Astrocyte of the cerebellum (primary cell): ENCODE measurements at regions of chr15 and their contacts with region 1.

Region 1: DNA sequence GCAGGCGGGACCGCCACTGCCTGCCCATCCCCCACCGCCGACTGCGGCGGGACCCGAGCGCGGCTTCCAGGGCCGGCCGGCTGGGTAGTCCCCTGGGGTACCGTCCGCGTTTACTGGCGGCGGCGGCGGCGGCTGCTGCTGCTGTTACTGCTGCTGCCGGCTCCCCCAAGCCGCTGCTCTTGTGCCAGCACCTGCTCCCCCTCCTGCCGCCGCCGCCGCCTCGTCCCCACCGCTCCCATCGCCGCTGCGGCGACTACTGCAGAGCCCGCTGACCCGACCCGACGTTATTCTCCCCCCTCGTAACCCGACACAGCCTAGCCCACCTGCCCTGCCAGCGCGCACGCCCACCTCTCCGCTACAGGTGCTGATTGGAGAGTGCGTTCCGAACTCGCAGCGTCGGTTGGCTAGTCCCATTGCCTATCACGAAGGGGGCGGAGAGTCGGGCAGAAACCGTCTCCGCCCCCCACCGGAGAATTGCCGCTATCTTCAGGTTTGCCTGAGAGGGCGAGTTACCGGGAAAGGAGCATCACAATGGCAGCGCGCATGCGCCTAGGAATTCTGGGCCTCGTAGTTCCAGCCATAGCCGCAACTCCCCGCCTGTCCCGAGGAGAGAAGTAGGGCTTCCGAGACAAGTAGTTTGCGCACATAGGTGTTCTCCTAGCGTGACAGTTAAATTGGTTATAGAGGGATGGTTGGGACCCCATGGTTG is at the start of gene TTBK2:
- DNase-seq: peak; percentile 97
- H3K4me3 ChIP-seq: peak within 1 kb of the TSS; percentile 53
- CTCF ChIP-seq: no peak

Region 2: DNA sequence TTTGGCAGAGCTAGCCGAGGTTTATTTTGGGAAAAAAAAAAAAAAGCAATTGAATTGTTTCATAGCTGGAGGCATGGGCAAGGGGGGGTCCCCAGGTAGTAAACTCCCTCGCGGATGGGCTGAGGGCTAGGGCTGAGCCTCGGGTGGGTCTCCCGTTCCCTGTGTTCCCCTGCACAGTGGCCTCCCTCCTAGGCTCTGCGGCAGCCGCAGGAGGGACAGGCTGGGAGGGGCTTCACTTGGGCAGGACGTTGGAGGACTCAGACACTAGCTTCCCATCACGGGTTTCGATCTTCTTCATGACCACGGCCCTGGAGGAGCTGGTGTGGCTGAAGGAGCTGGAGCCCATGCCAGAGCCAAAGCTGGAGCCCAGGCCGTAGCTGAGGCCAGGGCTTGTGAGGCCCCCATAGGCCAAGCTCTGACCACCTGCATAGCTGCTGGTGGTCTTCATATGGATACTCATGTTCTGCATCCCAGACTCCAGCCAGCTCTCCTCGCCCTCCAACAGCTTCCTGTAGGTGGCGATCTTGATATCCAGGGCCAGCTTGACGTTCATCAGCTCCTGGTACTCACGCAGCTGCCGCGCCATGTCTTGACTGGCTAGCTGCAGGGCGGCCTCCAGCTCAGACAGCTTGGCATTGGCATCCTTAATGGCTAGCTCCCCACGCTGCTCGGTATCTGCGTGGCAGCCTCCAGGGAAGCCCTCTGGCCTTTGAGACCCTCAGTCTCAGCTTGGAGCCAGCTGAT is 119.8 kb before region 1 on chr15:
- in situ Hi-C with region 1: loop called (anchors 25 kb)
- DNase-seq: no peak
- H3K4me3 ChIP-seq: no peak overlapping the region
- CTCF ChIP-seq: no peak